ENCODE measurements at regions of chr6 and their contacts with region 1.

Region 1: GRCh38 chr6:56595490-56596122 is 47.1 kb downstream of the DST start:
- DNase-seq: peak; percentile 45 to 67 (median 46)
- ATAC-seq: peak; percentile 94
- H3K4me3 ChIP-seq: no peak overlapping the region
- H3K27ac ChIP-seq: no peak overlapping the region
- H3K4me1 ChIP-seq: no peaks in the 10 kb centered on the region
- H3K27me3 ChIP-seq: no peaks in the 10 kb centered on the region
- CTCF ChIP-seq: peak; percentile 55 to 66 (median 62)
- EP300 ChIP-seq: no peak
- POLR2A ChIP-seq: no peak
- RAD21 ChIP-seq: peak; percentile 30 to 66; a peak in 2 of 4 replicates

Region 2: DNA sequence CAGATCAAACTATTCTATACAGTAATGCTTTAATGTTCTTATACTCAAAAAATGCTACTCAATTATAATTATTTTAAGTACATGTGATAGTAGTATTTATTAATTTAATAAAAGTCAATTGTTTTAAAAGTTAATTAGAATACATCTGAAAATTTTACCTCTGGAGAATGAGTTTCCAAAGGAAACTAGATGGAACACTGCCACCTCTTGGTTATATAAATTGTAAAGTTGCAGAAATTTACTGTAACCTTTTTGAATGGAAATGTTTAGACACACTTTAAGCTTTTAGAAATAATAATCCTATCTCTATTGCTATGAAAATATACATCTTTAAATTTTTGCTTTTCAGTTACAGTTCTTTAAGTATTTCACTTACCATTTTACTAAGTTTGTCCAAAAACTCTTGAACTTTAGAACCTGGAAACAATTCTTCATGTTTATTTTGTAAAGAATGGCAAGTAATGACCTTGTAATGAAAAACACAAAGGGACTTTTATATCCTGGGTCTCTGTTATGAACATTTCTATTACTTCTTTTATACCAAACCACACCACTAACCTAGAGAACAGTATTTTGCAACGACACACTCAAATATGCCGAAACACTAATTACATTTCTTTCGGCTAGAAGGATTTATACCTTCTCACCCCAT is 709.3 kb before region 1 on chr6:
- CTCF ChIA-PET with region 1: no interaction called
- POLR2A ChIA-PET with region 1: no interaction called
- in situ Hi-C with region 1: loop called (anchors 25 kb)
- intact Hi-C with region 1: no loop called
- DNase-seq: no peak
- ATAC-seq: no peak
- H3K4me3 ChIP-seq: no peak overlapping the region
- H3K27ac ChIP-seq: no peak overlapping the region
- H3K4me1 ChIP-seq: no peaks in the 10 kb centered on the region
- H3K27me3 ChIP-seq: no peaks in the 10 kb centered on the region
- CTCF ChIP-seq: 0 out of 6 replicates have a peak, but pooled peaks of 1 of the 3 experiments have one; percentile 1
- EP300 ChIP-seq: no peak
- POLR2A ChIP-seq: no peak
- RAD21 ChIP-seq: no peak

Region 3: GRCh38 chr6:56314683-56315523 is 280.7 kb before region 1 on chr6:
- CTCF ChIA-PET with region 1: interaction called, 6 read pairs
- POLR2A ChIA-PET with region 1: no interaction called
- in situ Hi-C with region 1: no loop called
- intact Hi-C with region 1: loop called (anchors 1 kb)
- DNase-seq: peak; percentile 14 to 51 (median 24)
- ATAC-seq: peak; percentile 83
- H3K4me3 ChIP-seq: no peak overlapping the region
- H3K27ac ChIP-seq: no peak overlapping the region
- H3K4me1 ChIP-seq: no peaks in the 10 kb centered on the region
- H3K27me3 ChIP-seq: no peaks in the 10 kb centered on the region
- CTCF ChIP-seq: peak; percentile 55 to 74 (median 71)
- EP300 ChIP-seq: no peak
- POLR2A ChIP-seq: no peak
- RAD21 ChIP-seq: peak; percentile 71 to 81

Region 4: GRCh38 chr6:56581296-56581925 is 14.2 kb before region 1 on chr6:
- CTCF ChIA-PET with region 1: no interaction called
- POLR2A ChIA-PET with region 1: no interaction called
- in situ Hi-C with region 1: no loop called
- intact Hi-C with region 1: no loop called
- DNase-seq: no peak
- ATAC-seq: no peak
- H3K4me3 ChIP-seq: no peak overlapping the region
- H3K27ac ChIP-seq: no peak overlapping the region
- H3K4me1 ChIP-seq: no peaks in the 10 kb centered on the region
- H3K27me3 ChIP-seq: no peaks in the 10 kb centered on the region
- CTCF ChIP-seq: no peak
- EP300 ChIP-seq: no peak
- POLR2A ChIP-seq: no peak
- RAD21 ChIP-seq: no peak

Region 5: GRCh38 chr6:56671651-56672461 is 76.2 kb after region 1 on chr6:
- CTCF ChIA-PET with region 1: no interaction called
- POLR2A ChIA-PET with region 1: no interaction called
- in situ Hi-C with region 1: no loop called
- intact Hi-C with region 1: no loop called
- DNase-seq: no peak
- ATAC-seq: no peak
- H3K4me3 ChIP-seq: no peak overlapping the region
- H3K27ac ChIP-seq: no peak overlapping the region
- H3K4me1 ChIP-seq: no peaks in the 10 kb centered on the region
- H3K27me3 ChIP-seq: no peaks in the 10 kb centered on the region
- CTCF ChIP-seq: no peak
- EP300 ChIP-seq: no peak
- POLR2A ChIP-seq: no peak
- RAD21 ChIP-seq: no peak

Region 6: GRCh38 chr6:56683882-56684281 is 88.3 kb after region 1 on chr6:
- CTCF ChIA-PET with region 1: no interaction called
- POLR2A ChIA-PET with region 1: no interaction called
- in situ Hi-C with region 1: no loop called
- intact Hi-C with region 1: no loop called
- DNase-seq: no peak
- ATAC-seq: no peak
- H3K4me3 ChIP-seq: no peak overlapping the region
- H3K27ac ChIP-seq: no peak overlapping the region
- H3K4me1 ChIP-seq: no peaks in the 10 kb centered on the region
- H3K27me3 ChIP-seq: no peaks in the 10 kb centered on the region
- CTCF ChIP-seq: no peak
- EP300 ChIP-seq: no peak
- POLR2A ChIP-seq: no peak
- RAD21 ChIP-seq: no peak